Endothelial cell of umbilical vein (primary cell): ENCODE measurements at regions of chr22 and their contacts with region 1.

Region 1: GRCh38 chr22:40651563-40652501 is 15.3 kb upstream of the MRTFA start:
- DNase-seq: peak; percentile 98
- H3K4me3 ChIP-seq: peak overlapping the region in 2 of 3 experiments; percentile 49 to 64
- H3K27ac ChIP-seq: peak overlapping the region; percentile 88
- H3K4me1 ChIP-seq: peaks cover 14% of the 10 kb centered on the region
- H3K27me3 ChIP-seq: no peaks in the 10 kb centered on the region
- CTCF ChIP-seq: peak in 1 of 2 donors; percentile 6
- POLR2A ChIP-seq: peak; percentile 91

Region 2: GRCh38 chr22:40673017-40673416 is 21.2 kb after region 1 on chr22:
- CTCF ChIA-PET with region 1: interaction called, 3 read pairs
- POLR2A ChIA-PET with region 1: no interaction called
- dilution Hi-C with region 1: no loop called
- intact Hi-C with region 1: loop called (anchors 1 kb)
- DNase-seq: peak; percentile 73
- H3K4me3 ChIP-seq: no peak overlapping the region
- H3K27ac ChIP-seq: peak overlapping the region; percentile 42
- H3K4me1 ChIP-seq: peaks cover 10% of the 10 kb centered on the region
- H3K27me3 ChIP-seq: no peaks in the 10 kb centered on the region
- CTCF ChIP-seq: no peak
- POLR2A ChIP-seq: no peak

Region 3: DNA sequence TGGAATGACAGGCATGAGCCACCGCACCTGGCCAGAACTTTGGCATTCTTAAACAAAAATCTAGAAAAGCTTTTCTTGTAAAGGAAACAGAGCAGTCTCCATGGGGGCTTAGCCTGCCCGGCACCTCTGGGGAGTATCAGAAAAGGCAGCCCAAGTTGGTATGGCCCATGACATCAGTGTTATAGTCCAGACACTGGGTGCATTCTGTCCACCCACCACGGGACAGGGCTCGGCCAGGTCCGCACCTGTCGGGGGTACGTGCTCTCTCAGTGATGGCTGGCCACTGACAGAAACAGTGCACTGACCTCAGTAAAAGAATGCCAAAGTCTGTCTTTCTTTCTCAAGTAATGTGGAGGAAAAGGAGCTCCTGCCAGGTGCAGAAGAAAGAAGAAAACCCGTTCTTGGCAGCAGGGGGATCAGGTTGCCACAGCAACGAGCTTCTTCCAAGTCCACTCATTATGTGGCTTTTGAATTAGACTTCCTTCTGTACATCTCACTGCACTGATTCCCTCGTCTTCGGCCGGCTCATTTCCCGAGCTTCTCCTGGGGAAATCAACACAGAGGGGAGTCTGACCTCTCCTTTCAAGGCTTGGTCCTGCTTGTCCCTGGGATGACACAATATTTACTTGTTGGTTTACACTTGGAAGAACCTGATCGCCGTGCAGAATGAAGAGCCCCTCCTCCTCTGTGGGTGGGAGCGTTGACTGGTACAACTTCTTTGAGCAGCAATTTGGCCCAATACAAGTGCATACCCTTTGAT is 62.5 kb after region 1 on chr22:
- CTCF ChIA-PET with region 1: interaction called, 3 read pairs
- POLR2A ChIA-PET with region 1: interaction called, 11 read pairs
- dilution Hi-C with region 1: no loop called
- intact Hi-C with region 1: no loop called
- DNase-seq: peak; percentile 19
- H3K4me3 ChIP-seq: no peak overlapping the region
- H3K27ac ChIP-seq: no peak overlapping the region
- H3K4me1 ChIP-seq: peaks cover 4% of the 10 kb centered on the region
- H3K27me3 ChIP-seq: peaks cover 0 to 3% of the 10 kb centered on the region in 2 experiments
- CTCF ChIP-seq: no peak
- POLR2A ChIP-seq: no peak